Activated naive CD4-positive, alpha-beta T cell treated with anti-CD3 and anti-CD28 coated beads for 36 hours (primary cell): ENCODE measurements at regions of chr2 and their contacts with region 1.

Region 1: GRCh38 chr2:231604685-231605606 is 12.3 kb downstream of the TEX44 start:
- DNase-seq: peak; percentile 92
- H3K4me3 Mint-ChIP-seq: peak overlapping the region; percentile 53
- H3K27ac Mint-ChIP-seq: no peak overlapping the region
- H3K4me1 Mint-ChIP-seq: peaks cover 7% of the 10 kb centered on the region
- H3K27me3 Mint-ChIP-seq: no peaks in the 10 kb centered on the region

Region 2: DNA sequence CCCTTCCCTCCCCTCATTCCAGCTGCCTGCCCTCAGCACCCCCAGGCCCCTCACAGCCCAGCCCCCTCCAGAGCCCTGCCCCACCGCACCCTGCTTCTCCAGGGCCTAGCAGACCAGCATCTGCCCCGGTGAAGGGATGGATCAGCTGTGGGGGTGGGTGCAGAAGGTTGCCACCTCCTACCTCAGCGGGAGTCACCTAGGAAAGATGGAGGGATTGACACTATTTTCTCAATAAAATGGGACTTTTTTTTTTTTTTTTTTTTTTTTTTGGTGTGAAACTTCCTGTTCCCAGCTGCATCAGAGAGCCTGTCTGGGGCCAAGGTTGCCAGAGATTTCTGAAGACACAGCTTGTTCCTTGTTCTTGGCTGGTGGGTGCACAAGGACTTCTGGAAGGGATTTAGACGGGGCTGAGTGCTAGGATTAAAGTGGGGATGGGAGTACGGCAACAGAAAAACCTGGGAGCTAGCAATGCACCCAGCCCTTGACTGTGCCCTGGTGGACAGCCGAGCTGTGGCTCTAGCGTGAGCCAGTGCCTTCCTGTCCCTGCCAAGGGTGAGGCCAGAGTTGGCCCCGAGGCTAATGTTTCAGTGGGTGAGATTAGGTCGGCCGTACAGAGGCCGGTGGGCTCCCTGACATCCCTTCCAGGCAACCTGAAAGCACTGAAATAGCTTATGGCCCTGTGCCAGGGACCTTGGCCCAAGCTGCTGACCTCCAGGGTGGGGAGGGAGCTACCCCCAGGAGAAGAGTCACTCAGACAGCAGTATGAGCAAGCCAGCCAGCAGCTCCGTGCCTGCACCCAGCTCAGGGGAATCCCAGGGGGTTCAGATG is 204.9 kb before region 1 on chr2:
- CTCF ChIA-PET with region 1: no interaction called
- intact Hi-C with region 1: no loop called
- DNase-seq: no peak
- H3K4me3 Mint-ChIP-seq: no peak overlapping the region
- H3K27ac Mint-ChIP-seq: no peak overlapping the region
- H3K4me1 Mint-ChIP-seq: peaks cover 4% of the 10 kb centered on the region
- H3K27me3 Mint-ChIP-seq: peaks cover 12% of the 10 kb centered on the region

Region 3: DNA sequence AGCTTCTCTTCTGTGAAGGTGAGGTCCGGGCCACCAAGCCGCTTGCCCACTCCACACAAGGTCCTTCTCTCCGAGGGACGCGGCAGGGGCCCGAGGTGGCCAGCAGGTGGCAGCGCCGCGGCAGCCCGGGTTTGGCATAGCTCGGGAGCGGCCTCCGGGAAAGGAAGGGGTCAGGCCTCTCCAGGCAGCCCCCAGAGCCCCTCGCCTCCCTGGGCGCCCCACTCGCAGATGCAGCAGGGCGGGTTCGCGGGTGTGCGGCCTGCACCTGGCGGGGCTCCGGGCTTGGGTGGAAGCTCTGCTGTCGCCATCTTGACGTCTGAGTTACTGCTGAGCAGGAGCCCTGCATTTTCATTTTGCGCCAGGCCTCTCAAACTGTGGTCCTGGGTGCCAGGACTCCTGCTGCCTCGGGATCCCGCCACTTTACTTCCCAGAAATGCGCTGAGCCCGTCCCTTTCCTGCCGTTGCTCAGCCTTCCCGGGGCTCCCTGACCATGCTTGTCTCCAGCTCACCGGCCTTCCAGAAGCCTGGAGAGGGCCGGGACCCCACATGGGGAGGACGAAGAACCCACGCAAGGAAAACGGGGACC is 122.0 kb before region 1 on chr2:
- CTCF ChIA-PET with region 1: interaction called, 4 read pairs
- intact Hi-C with region 1: loop called (anchors 1 kb)
- DNase-seq: peak; percentile 78
- H3K4me3 Mint-ChIP-seq: peak overlapping the region; percentile 83
- H3K27ac Mint-ChIP-seq: peak overlapping the region; percentile 89
- H3K4me1 Mint-ChIP-seq: peaks cover 13% of the 10 kb centered on the region
- H3K27me3 Mint-ChIP-seq: no peaks in the 10 kb centered on the region

Region 4: DNA sequence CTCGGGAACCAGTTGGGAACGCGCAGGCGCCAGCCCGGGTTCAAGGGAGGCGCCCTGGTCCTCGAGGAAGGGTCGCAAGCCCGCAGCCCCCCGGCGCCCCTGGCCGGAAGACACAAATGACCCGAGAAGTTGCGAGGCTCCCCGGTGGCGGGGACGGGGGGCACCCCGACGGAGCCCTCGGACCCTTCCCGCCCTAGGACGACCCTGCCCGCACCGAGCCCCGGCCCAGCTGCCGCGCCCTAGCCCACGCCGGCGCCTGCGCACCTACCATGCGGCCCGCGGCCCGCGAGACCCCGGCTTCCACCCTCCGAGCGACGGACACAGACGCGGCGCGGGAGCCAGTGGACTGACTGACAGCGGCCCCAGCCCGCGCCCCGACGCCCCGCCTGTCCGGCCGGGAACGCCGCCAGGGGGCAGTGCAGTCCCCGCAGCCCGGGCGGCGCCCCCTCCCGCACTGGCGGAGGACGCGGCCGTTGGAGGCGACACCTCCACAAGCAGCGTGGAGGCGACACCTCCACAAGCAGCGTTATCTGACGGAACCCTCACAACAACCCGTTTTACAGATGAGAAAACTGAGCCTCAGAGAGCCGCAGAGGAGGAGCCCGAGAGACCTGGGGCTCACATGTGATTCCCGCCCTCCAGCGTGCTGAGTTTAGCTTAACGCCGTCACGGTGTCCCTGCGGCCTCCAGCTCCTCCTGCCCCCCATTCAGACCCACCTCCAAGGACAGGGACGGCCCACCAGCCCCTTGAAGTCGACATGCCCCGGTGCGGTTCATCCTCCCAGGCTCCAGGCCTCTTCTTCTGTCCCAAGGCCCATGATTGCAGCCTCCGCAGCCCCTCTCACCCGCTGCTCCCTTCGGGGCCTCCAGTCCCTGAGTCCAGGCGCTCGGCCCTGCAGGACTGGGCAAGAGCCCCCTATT is 74.6 kb before region 1 on chr2 and contains the start of gene NMUR1:
- CTCF ChIA-PET with region 1: interaction called, 5 read pairs
- intact Hi-C with region 1: loop called (anchors 1 kb)
- DNase-seq: peak; percentile 59
- H3K4me3 Mint-ChIP-seq: peak within 1 kb of the TSS; percentile 3
- H3K27ac Mint-ChIP-seq: no peak within 1 kb of the TSS
- H3K4me1 Mint-ChIP-seq: peaks cover 5% of the 10 kb centered on the region
- H3K27me3 Mint-ChIP-seq: peaks cover 15% of the 10 kb centered on the region
- total RNA-seq, gene NMUR1: not detected

Region 5: GRCh38 chr2:231563378-231563961 is 41.5 kb before region 1 on chr2:
- CTCF ChIA-PET with region 1: interaction called, 60 read pairs
- intact Hi-C with region 1: loop called (anchors 1 kb)
- DNase-seq: peak; percentile 74
- H3K4me3 Mint-ChIP-seq: no peak overlapping the region
- H3K27ac Mint-ChIP-seq: no peak overlapping the region
- H3K4me1 Mint-ChIP-seq: peaks cover 2% of the 10 kb centered on the region
- H3K27me3 Mint-ChIP-seq: no peaks in the 10 kb centered on the region

Region 6: GRCh38 chr2:231590619-231591018 is 14.3 kb before region 1 on chr2:
- CTCF ChIA-PET with region 1: interaction called, 10 read pairs
- intact Hi-C with region 1: no loop called
- DNase-seq: no peak
- H3K4me3 Mint-ChIP-seq: no peak overlapping the region
- H3K27ac Mint-ChIP-seq: no peak overlapping the region
- H3K4me1 Mint-ChIP-seq: no peaks in the 10 kb centered on the region
- H3K27me3 Mint-ChIP-seq: no peaks in the 10 kb centered on the region